ENCODE measurements at regions of chr12 and their contacts with region 1.

Region 1: DNA sequence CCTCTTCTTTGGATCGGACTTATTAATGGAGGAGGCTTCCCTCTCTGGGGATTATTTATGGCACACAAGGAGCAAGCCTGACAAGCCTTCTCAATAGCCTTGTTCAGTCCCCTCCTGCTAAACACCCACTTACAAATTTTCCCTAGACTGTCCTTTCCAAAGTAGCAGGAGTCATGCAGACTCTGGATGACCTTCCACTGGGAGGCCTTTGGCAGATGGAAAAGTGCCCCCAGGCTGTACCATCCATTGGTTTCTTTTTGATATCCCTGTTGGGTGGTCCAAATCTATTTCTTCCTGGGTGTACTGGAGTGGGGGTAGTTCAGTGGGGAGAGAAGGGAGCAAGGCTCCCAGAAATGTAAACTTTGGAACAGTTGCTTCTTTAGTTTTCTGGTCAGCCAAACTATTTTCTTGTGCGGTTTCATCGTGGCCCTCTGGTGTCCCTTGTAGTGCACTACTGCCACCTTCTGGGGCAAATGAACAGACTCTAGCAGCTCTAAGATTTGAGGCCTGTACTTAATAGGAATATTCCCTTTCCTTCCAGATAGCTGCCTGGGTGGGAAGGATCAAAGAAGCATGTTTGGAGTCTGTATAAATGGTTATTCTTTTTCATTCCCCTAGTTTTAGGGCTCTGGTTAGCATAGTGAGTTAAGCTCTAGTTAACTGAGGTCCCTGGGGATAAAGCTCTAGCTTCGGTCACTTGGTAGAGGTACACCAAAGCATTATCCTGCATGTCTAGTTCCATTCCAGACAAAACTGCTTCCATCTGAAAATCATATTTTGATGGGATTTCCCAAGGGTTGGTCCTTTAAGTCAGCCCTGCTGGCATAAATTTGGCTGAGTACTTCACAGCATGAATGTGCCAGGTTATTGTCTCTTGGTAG is 409.5 kb downstream of the SLC6A15 start:
- DNase-seq: peak; percentile 25 to 69
- ATAC-seq: peak; percentile 82 to 94; a peak in 5 of 6 replicates
- H3K4me3 ChIP-seq: no peak overlapping the region
- H3K27ac ChIP-seq: no peak overlapping the region
- H3K4me1 ChIP-seq: no peaks in the 10 kb centered on the region
- CTCF ChIP-seq: peak; percentile 51
- EP300 ChIP-seq: no peak
- POLR2A ChIP-seq: no peak
- RAD21 ChIP-seq: peak; percentile 61 to 82

Region 2: DNA sequence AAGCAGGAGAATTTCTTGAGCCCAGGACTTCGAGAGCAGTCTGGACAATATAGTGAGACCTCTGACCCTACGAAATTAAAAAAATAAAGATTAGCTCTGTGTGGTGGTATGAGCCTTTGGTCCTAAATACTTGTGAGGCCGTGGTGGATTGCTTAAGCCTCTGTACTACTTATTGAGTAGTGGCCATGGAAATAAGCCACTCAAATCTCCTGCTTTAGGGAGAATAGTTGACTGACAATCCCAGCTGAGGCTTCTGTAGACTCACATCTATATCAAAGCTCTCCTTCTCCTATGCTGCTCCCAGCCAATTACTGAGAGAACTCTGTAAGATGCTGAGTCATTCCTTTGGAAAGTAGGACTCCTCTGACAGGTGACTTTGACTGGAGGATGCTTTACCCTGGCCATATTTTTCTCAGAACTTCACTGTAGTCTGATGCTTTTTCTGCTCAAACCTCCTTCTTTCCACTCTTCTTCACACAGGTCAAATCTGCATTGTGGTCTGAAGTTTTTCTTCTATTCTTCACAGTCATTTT is 10.7 kb before region 1 on chr12:
- CTCF ChIA-PET with region 1: interaction called, 11 read pairs
- POLR2A ChIA-PET with region 1: no interaction called
- DNase-seq: no peak
- ATAC-seq: no peak
- H3K4me3 ChIP-seq: no peak overlapping the region
- H3K27ac ChIP-seq: no peak overlapping the region
- H3K4me1 ChIP-seq: no peaks in the 10 kb centered on the region
- CTCF ChIP-seq: no peak
- EP300 ChIP-seq: no peak
- POLR2A ChIP-seq: no peak
- RAD21 ChIP-seq: no peak

Region 3: DNA sequence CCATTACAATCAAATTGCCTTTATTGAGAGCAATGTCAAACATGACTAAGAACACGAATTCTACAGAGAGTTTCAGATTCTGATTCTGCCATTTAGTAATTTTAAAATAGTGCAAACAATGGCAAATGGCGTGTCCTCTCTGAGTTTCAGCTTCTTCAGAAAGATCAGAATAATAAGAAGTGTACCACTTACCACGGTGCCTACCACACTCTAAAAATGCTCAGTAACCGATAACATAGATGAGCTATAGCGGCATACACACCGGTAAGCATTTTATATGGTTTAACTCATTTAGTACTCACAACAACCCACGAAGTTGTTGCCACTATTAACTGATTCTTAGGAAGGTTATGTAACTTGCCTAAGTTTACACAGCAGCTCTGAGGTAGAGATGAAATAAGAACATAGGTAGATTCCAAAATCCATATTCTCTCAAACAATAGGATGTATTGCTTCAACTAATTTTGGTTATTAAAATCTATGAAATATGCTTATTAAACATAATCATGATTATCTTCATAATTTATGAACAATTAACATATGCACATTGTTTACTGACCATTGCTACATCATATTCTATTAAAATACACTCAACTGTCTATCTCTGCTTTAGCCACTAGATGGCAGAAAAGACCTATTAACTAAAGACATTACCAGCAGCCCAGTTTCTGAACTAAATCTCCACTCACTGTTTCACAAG is 371.1 kb after region 1 on chr12:
- CTCF ChIA-PET with region 1: no interaction called
- POLR2A ChIA-PET with region 1: no interaction called
- DNase-seq: peak; percentile 10 to 62
- ATAC-seq: peak; percentile 89 to 96
- H3K4me3 ChIP-seq: no peak overlapping the region
- H3K27ac ChIP-seq: no peak overlapping the region
- H3K4me1 ChIP-seq: no peaks in the 10 kb centered on the region
- CTCF ChIP-seq: peak; percentile 86
- EP300 ChIP-seq: no peak
- POLR2A ChIP-seq: no peak
- RAD21 ChIP-seq: peak; percentile 90

Measured in A549 (cell line).